ENCODE measurements at regions of chr15 and their contacts with region 1.

Region 1: DNA sequence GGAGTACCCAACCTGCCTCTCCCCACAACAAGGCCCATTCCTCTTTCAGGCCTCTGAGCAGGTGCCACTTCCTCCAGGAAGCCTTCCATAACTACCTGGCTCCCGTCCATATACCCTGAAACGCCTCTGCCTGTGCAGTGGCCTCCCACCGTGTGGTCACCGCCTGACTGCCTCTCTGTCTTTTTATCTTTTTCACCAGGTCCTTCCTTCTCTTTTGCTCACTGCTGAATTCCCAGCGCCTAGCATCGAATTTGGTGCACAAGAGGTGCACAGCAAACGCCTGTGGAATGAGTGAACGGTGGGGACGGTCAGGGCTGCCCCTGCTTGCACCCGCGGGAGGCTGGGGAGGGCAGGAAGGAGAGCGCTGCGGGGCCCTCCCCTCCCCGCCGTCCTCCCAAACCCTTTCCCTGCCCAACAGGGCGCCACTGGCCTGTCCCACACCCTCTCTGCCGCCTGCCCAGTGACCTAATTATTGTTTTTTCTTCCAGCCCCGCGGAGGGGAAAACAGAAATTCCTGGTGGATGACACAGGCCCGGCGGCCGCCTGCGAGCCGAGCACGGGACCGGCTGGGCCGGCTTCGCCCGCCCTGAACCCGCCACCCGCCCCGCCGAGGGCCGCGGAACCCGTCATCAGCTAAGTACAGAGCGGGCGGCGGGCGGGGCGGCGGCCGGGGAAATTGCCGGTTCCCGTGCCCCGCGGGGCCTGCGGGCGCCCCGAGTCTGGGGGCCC is 140.1 kb downstream of the SMAD6 start:
- DNase-seq: peak; percentile 94 to 96
- H3K4me3 ChIP-seq: peak overlapping the region in 1 of 3 donors; percentile 24
- H3K27ac ChIP-seq: peak overlapping the region; percentile 93 to 98 (median 93)
- H3K4me1 ChIP-seq: peaks cover 16 to 31% of the 10 kb centered on the region in 2 donors
- H3K27me3 ChIP-seq: no peaks in the 10 kb centered on the region
- CTCF ChIP-seq: no peak
- POLR2A ChIP-seq: peak; percentile 24 to 69

Region 2: GRCh38 chr15:66805202-66805885 is 36.8 kb before region 1 on chr15:
- intact Hi-C with region 1: loop called (anchors 5 kb)
- DNase-seq: no peak
- H3K4me3 ChIP-seq: no peak overlapping the region
- H3K27ac ChIP-seq: no peak overlapping the region
- H3K4me1 ChIP-seq: peaks cover 26 to 36% of the 10 kb centered on the region in 2 donors
- H3K27me3 ChIP-seq: no peaks in the 10 kb centered on the region
- CTCF ChIP-seq: no peak
- POLR2A ChIP-seq: no peak

Region 3: DNA sequence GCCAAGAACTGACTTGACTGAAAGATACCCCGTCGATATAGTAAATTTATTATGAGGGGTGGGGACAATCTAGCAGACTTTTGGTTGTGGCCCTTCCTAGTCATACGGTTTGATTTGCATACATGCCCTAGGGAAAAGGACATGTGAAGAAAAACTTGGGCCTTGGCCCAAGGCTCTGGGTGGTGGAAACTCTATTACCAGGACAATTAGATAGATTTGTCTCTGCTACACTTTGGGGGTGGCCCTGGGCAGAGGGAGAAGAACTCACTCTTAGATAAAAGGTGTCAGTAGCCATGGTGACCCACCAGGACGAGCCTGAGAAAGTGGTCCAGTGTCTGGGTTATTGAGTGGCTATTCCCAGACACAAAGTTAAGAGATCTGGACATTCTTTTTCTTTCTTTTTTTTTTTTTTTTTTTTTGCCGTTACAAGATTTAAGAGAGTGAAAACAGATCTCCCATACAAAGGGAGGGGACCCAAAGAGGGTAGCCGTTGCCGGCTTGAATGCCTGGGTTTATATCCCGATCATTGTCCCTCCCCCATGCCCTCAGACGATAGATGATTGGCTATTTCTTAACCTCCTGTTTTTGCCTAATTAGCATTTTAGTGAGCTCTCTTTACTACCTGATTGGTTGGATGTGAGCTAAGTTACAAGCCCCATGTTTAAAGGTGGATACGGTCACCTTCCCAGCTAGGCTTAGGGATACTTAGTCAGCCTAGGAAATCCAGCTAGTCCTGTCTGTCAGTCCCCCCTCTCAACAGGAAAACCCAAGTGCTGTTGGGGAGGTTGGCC is 126.9 kb after region 1 on chr15:
- intact Hi-C with region 1: no loop called
- DNase-seq: no peak
- H3K4me3 ChIP-seq: no peak overlapping the region
- H3K27ac ChIP-seq: no peak overlapping the region
- H3K4me1 ChIP-seq: no peaks in the 10 kb centered on the region
- H3K27me3 ChIP-seq: no peaks in the 10 kb centered on the region
- CTCF ChIP-seq: no peak
- POLR2A ChIP-seq: no peak

Region 4: GRCh38 chr15:67080900-67081431 is 238.8 kb after region 1 on chr15:
- intact Hi-C with region 1: no loop called
- DNase-seq: peak in 1 of 2 donors; percentile 33
- H3K4me3 ChIP-seq: no peak overlapping the region
- H3K27ac ChIP-seq: peak overlapping the region; percentile 62 to 71 (median 65)
- H3K4me1 ChIP-seq: peaks cover 82 to 96% of the 10 kb centered on the region in 2 donors
- H3K27me3 ChIP-seq: no peaks in the 10 kb centered on the region
- CTCF ChIP-seq: peak in 1 of 6 experiments; percentile 6
- POLR2A ChIP-seq: no peak